Esophagus muscularis mucosa (tissue), 4 donors: ENCODE measurements at regions of chr7 and their contacts with region 1.

Region 1: DNA sequence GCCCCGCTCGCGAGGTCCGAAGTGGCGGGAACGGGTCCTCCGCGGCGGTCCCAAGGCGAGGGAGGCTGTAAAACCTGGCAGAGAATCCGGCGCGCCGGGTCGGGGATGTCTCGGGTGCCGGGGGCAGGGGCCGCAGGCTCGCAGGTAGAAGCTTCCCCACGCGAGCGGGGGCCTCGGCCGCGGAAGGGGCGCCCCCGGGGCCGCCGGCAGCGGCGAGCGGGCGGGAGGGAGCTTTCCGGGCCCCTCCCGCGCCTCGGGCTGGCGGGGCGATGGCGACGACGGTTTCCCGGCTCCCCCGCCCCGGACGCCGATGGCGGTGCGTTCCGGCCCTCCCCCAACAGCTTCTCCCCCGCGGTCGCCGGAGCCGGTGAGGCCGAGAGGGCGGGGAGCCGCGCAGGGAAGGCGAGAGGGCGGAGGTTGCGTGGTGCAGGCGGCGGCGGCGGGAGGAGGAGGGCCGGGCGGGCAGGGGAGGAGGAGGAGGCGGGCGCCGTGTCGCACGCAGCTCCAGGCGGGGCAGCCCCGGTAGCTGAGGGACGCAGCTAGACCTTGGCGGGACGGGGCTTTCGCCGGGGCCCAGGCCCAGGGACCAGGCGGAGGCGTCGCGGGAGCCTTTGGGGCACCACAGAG is at the start of gene CUL1:
- DNase-seq: peak; percentile 96
- H3K4me3 ChIP-seq: peak within 1 kb of the TSS; percentile 81 to 99 (median 96)
- H3K27ac ChIP-seq: peak within 1 kb of the TSS; percentile 96 to 99 (median 99)
- H3K4me1 ChIP-seq: peaks cover 24 to 47% (median 43%) of the 10 kb centered on the region in 4 donors
- H3K27me3 ChIP-seq: no peaks in the 10 kb centered on the region
- CTCF ChIP-seq: no peak
- EP300 ChIP-seq: no peak
- POLR2A ChIP-seq: peak; percentile 66
- total RNA-seq, gene CUL1: 73.1 to 87.1 (median 77.8) TPM

Region 2: DNA sequence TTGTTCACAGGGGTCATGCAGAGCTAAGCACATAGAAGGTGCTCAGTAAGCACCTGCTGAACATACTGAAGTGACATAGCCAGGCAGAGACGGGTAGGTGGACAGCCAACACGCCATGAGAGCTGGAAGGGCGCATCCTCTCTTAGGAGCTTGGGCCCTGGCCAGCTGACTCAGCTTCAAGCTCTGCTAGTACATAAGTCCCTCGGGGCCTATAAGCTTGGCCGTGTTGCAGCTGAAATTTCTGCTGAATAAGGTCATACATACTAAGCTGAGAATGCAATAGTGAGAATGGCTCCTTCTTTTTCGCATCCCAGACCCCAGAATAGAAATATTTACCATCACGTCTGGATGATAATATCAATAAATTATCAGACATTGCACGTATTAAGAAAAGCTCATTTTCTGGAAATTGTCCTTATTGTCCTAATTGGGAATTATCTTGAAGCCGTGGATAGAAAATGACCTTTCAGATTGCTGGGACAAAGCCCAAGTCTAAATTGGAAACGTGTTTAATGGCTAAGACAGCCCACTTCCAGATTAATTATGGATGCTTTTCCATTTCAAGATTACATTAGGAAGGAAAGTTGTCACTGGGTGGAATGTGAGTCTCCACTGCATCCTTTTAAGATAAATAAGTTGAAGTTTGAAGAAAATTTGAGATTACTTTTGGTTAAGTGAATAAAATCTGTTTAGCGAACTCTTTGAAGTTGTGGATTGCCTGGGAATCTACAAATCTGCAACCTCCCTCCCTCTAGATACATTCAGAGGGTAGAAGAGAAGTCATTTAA is 395.0 kb before region 1 on chr7:
- intact Hi-C with region 1: no loop called
- DNase-seq: no peak
- H3K4me3 ChIP-seq: no peak overlapping the region
- H3K27ac ChIP-seq: peak overlapping the region; percentile 18 to 50 (median 30)
- H3K4me1 ChIP-seq: peaks cover 11 to 23% (median 20%) of the 10 kb centered on the region in 4 donors
- H3K27me3 ChIP-seq: no peaks in the 10 kb centered on the region
- CTCF ChIP-seq: no peak
- EP300 ChIP-seq: no peak
- POLR2A ChIP-seq: no peak

Region 3: DNA sequence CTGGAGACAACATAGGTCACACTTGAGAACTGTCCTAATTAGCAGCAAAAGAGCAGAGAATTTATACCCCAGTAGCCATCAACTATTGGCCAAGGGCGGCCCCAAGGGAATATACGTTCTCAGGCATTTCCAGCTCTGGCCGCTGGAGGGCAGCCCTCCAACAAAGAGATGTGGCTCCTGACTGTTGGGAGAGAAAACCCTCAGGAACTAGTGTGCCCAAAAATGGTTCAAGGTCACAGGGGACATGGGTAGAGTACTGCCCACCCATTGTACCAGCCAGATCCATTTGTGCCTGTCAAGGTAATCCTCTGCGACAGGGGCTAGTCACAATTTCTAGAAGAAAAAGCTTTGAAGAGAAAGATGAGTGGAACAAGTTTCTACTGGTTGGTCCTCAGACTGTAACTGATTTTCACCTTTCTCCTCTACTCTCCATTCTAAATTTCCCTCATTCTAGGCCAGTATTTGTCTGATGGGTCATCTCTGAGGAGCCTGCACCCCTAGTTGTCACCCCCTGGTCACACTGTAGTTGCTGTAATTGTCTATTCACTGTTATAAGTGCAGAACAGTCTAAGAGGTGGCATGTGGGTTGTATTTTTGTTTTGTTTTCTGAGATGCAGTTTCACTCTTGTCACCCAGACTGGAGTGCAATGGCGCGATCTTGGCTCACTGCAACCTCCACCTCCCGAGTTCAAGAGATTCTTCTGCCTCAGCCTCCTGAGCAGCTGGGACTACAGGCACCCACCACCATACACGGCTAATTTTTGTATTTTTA is 122.7 kb before region 1 on chr7:
- intact Hi-C with region 1: loop called (anchors 5 kb)
- DNase-seq: no peak
- H3K4me3 ChIP-seq: no peak overlapping the region
- H3K27ac ChIP-seq: no peak overlapping the region
- H3K4me1 ChIP-seq: no peaks in the 10 kb centered on the region
- H3K27me3 ChIP-seq: no peaks in the 10 kb centered on the region
- CTCF ChIP-seq: peak; percentile 72 to 85 (median 75)
- EP300 ChIP-seq: no peak
- POLR2A ChIP-seq: no peak

Region 4: DNA sequence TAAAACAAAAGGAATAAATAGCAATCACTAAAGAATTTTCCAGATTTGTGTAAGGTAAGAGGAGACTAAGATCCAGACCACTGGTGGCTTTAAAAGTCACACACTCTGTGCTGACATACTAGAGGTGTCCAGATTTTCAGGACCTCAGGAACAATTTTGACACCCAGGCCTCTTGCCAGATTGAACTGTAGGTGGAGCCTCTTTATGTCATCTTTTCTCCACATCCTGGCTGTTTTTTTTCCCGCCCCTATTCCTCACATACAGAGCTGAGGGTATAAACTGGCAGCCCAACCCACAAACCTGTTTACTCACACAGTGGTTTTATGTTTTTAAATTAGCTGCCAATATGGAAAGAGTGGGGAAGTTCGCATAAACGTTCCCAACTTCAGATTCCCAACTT is 62.2 kb before region 1 on chr7:
- intact Hi-C with region 1: no loop called
- DNase-seq: no peak
- H3K4me3 ChIP-seq: no peak overlapping the region
- H3K27ac ChIP-seq: no peak overlapping the region
- H3K4me1 ChIP-seq: no peaks in the 10 kb centered on the region
- H3K27me3 ChIP-seq: no peaks in the 10 kb centered on the region
- CTCF ChIP-seq: no peak
- EP300 ChIP-seq: no peak
- POLR2A ChIP-seq: no peak

Region 5: GRCh38 chr7:148747275-148747674 is 48.8 kb after region 1 on chr7:
- intact Hi-C with region 1: no loop called
- DNase-seq: no peak
- H3K4me3 ChIP-seq: no peak overlapping the region
- H3K27ac ChIP-seq: no peak overlapping the region
- H3K4me1 ChIP-seq: peaks cover 0 to 16% (median 2%) of the 10 kb centered on the region in 4 donors
- H3K27me3 ChIP-seq: no peaks in the 10 kb centered on the region
- CTCF ChIP-seq: no peak
- EP300 ChIP-seq: no peak
- POLR2A ChIP-seq: no peak

Region 6: DNA sequence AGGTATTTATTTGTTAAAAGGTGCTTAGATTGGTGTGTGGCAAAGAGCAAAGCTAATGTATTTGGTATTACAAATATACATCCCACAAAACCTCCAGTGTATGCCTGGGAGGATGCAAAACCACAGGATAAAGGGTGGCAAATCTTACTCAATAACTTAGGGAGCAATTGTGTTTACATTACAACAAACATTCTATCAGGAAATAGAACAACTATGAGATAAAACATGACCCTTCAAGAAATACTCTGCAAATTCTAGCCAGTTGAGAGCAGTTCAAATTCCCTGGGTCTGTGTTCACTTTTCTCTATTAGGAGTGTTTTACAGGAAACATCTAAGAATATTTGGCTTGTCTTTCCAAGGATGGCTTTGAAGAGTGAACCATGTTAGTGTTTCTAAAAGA is 65.1 kb after region 1 on chr7:
- intact Hi-C with region 1: loop called (anchors 10 kb)
- DNase-seq: no peak
- H3K4me3 ChIP-seq: no peak overlapping the region
- H3K27ac ChIP-seq: no peak overlapping the region
- H3K4me1 ChIP-seq: peaks cover 0 to 12% (median 8%) of the 10 kb centered on the region in 4 donors
- H3K27me3 ChIP-seq: no peaks in the 10 kb centered on the region
- CTCF ChIP-seq: no peak
- EP300 ChIP-seq: no peak
- POLR2A ChIP-seq: no peak

Region 7: GRCh38 chr7:148884299-148885022 is 186.0 kb after region 1 on chr7:
- intact Hi-C with region 1: loop called (anchors 5 kb)
- DNase-seq: peak; percentile 97
- H3K4me3 ChIP-seq: peak overlapping the region; percentile 84 to 97 (median 94)
- H3K27ac ChIP-seq: peak overlapping the region; percentile 88 to 98 (median 94)
- H3K4me1 ChIP-seq: peaks cover 0 to 18% (median 17%) of the 10 kb centered on the region in 4 donors
- H3K27me3 ChIP-seq: peaks cover 0 to 18% (median 2%) of the 10 kb centered on the region in 4 donors
- CTCF ChIP-seq: no peak
- EP300 ChIP-seq: no peak
- POLR2A ChIP-seq: peak; percentile 44

Region 8: DNA sequence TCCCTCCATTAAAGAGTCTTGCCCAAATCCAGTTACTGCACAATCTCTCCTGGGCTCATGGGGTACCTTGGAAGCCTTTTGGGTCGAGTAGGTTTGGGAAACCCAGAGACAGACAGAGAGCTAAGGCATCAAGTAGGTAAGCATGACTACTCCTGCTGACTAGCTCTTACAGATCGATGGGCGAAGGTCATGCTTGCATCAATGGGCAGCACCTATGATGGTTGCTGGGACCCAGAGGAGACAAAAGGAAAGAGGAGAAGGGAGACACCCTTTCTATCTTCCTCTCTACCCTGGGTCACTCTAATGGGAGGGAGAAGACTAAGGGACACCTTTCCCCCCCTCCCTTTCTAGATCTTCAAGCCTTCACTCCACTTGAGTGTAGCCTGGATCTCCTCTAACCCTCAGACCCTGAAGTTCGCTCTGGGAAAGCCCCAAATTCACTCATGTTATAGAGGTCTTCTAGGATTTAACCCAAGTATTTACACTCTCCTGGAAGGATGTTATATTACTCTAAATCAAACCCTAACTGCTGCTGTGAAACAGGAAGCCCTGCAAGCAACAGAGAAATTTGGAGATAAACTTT is 830.7 kb after region 1 on chr7:
- intact Hi-C with region 1: no loop called
- DNase-seq: no peak
- H3K4me3 ChIP-seq: no peak overlapping the region
- H3K27ac ChIP-seq: no peak overlapping the region
- H3K4me1 ChIP-seq: no peaks in the 10 kb centered on the region
- H3K27me3 ChIP-seq: no peaks in the 10 kb centered on the region
- CTCF ChIP-seq: no peak
- EP300 ChIP-seq: no peak
- POLR2A ChIP-seq: no peak